Naive thymus-derived CD4-positive, alpha-beta T cell (primary cell): ENCODE measurements at regions of chr10 and their contacts with region 1.

Region 1: DNA sequence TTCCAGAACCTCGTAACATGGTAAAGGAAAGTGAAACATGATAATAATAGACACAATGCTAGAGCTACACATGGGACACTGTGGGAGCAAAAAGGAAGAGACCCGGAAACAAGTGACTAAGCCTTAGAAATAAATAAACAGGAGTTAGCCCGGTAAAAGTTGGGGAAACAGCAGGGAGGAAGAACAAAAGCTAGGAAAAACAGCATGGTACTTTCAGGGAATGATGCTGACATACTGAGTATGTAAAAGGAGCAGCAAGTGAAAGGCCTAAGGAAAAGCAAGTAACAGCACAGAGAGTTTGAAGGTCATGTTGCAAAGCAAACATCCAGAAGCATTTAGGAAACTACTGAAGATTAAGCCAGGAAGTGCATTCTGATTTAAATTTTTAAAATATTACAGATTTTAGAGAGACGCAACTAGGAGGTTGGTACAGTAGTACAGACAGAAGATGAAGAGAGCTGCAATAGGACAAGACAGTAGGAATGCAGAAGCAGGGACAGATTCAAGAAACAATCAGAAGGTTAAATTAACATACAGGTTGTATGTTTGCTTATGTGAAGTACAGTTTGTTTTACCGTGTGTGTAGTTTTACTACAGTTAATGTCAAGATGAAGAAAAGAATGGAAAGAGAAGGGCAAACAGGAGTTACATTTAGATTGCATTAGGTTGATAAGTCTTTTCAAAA is 63.7 kb downstream of the ARHGAP12 start:
- DNase-seq: no peak
- ATAC-seq: no peak
- H3K4me3 ChIP-seq: no peak overlapping the region
- H3K4me3 Mint-ChIP-seq: peak overlapping the region in 1 of 10 donors; percentile 40
- H3K27ac ChIP-seq: no peak overlapping the region
- H3K27ac Mint-ChIP-seq: peak overlapping the region in 3 of 9 donors; percentile 1 to 3 (median 2)
- H3K4me1 ChIP-seq: peaks cover 0 to 3% of the 10 kb centered on the region in 2 donors
- H3K4me1 Mint-ChIP-seq: peaks cover 8 to 41% (median 34%) of the 10 kb centered on the region in 7 donors
- H3K27me3 ChIP-seq: no peaks in the 10 kb centered on the region
- H3K27me3 Mint-ChIP-seq: no peaks in the 10 kb centered on the region

Region 2: GRCh38 chr10:31947144-31947926 is 82.4 kb after region 1 on chr10:
- CTCF ChIA-PET with region 1: no interaction called
- POLR2A ChIA-PET with region 1: no interaction called
- intact Hi-C with region 1: loop called in 1 of 2 experiments (anchors 5 kb)
- DNase-seq: no peak
- ATAC-seq: no peak
- H3K4me3 ChIP-seq: no peak overlapping the region
- H3K4me3 Mint-ChIP-seq: no peak overlapping the region
- H3K27ac ChIP-seq: no peak overlapping the region
- H3K27ac Mint-ChIP-seq: no peak overlapping the region
- H3K4me1 ChIP-seq: no peaks in the 10 kb centered on the region
- H3K4me1 Mint-ChIP-seq: peaks cover 0 to 13% (median 2%) of the 10 kb centered on the region in 7 donors
- H3K27me3 ChIP-seq: no peaks in the 10 kb centered on the region
- H3K27me3 Mint-ChIP-seq: no peaks in the 10 kb centered on the region

Region 3: DNA sequence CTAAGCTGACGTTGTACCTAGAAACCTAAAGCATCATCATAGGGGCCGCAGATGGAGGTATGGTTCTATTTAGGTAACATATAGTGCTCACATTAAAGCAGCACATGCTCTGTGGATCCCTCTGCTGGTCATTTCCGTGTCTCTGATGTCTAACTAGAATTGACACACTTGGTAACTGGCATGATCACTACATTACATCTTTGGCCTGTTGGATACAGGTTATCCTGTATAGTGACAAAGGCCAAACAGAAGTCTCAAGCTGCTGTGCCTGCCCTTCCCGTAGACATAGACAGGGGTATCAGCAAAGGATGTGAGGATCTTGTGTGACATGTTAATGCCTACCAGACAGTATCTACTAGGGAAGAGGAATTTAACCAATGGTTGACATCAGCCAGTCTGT is 140.1 kb after region 1 on chr10:
- CTCF ChIA-PET with region 1: interaction called, 27 read pairs
- POLR2A ChIA-PET with region 1: interaction called, 3 read pairs
- intact Hi-C with region 1: loop called (anchors 1 kb)
- DNase-seq: peak in 7 of 9 donors; percentile 27 to 46 (median 40)
- ATAC-seq: peak; percentile 79
- H3K4me3 ChIP-seq: no peak overlapping the region
- H3K4me3 Mint-ChIP-seq: no peak overlapping the region
- H3K27ac ChIP-seq: no peak overlapping the region
- H3K27ac Mint-ChIP-seq: peak overlapping the region in 4 of 9 donors; percentile 36 to 85 (median 76)
- H3K4me1 ChIP-seq: no peaks in the 10 kb centered on the region
- H3K4me1 Mint-ChIP-seq: peaks cover 0 to 20% (median 13%) of the 10 kb centered on the region in 7 donors
- H3K27me3 ChIP-seq: no peaks in the 10 kb centered on the region
- H3K27me3 Mint-ChIP-seq: no peaks in the 10 kb centered on the region

Region 4: DNA sequence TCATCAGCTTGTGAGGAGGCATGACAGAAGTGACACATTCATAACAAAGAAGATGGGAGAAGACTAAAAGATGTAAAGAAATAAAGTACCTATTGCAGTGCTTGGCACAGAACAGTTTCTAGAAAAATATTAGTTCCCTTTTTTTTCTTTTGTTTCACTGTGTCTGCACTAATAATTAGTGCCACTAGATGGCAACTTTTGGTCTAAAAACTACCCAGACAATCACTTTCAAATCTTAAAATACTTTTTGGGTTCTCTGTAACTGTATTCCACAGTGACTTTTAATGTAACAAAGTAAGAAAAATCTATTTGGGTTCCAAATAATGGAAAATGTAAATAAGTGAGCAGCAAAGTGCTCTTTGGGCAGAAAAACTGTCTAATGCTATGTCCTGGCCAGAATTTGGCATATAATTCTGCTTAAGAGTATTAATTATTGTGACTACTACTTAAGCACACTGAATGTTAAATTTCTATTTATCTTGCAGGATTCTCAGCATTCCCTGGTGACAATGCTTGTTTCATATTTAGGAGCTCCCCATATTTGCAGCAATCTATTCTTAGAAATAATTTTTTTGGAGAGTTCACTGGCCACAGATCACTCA is 326.0 kb after region 1 on chr10:
- CTCF ChIA-PET with region 1: interaction called, 4 read pairs
- POLR2A ChIA-PET with region 1: no interaction called
- intact Hi-C with region 1: loop called in 1 of 2 experiments (anchors 1 kb)
- DNase-seq: peak in 6 of 9 donors; percentile 17 to 49 (median 42)
- ATAC-seq: peak; percentile 70
- H3K4me3 ChIP-seq: no peak overlapping the region
- H3K4me3 Mint-ChIP-seq: no peak overlapping the region
- H3K27ac ChIP-seq: no peak overlapping the region
- H3K27ac Mint-ChIP-seq: peak overlapping the region in 1 of 9 donors; percentile 3
- H3K4me1 ChIP-seq: no peaks in the 10 kb centered on the region
- H3K4me1 Mint-ChIP-seq: peaks cover 0 to 5% (median 4%) of the 10 kb centered on the region in 7 donors
- H3K27me3 ChIP-seq: no peaks in the 10 kb centered on the region
- H3K27me3 Mint-ChIP-seq: peaks cover 0 to 9% (median 0%) of the 10 kb centered on the region in 5 donors

Region 5: DNA sequence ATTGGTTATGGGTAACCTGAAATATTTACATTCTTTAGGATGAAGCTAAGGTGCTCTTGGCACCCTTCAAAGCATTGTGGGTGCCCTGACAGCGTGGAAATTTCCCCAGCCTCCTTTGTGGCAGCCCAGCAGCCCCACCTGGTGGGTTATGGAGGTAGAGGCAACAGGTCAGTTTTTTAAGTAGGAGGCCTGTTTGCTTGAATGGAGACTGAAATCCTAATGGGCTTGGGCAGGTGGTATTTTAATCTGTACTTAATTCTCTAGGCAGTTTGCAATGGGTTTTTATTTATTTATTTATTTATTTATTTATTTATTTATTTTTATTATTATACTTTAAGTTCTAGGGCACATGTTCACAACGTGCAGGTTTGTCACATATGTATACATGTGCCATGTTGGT is 342.6 kb after region 1 on chr10:
- CTCF ChIA-PET with region 1: interaction called, 4 read pairs
- POLR2A ChIA-PET with region 1: no interaction called
- intact Hi-C with region 1: loop called (anchors 1 kb)
- DNase-seq: peak; percentile 18 to 65 (median 40)
- ATAC-seq: peak; percentile 91
- H3K4me3 ChIP-seq: no peak overlapping the region
- H3K4me3 Mint-ChIP-seq: no peak overlapping the region
- H3K27ac ChIP-seq: no peak overlapping the region
- H3K27ac Mint-ChIP-seq: no peak overlapping the region
- H3K4me1 ChIP-seq: no peaks in the 10 kb centered on the region
- H3K4me1 Mint-ChIP-seq: peaks cover 0 to 5% (median 4%) of the 10 kb centered on the region in 7 donors
- H3K27me3 ChIP-seq: no peaks in the 10 kb centered on the region
- H3K27me3 Mint-ChIP-seq: peaks cover 0 to 6% (median 0%) of the 10 kb centered on the region in 5 donors

Region 6: DNA sequence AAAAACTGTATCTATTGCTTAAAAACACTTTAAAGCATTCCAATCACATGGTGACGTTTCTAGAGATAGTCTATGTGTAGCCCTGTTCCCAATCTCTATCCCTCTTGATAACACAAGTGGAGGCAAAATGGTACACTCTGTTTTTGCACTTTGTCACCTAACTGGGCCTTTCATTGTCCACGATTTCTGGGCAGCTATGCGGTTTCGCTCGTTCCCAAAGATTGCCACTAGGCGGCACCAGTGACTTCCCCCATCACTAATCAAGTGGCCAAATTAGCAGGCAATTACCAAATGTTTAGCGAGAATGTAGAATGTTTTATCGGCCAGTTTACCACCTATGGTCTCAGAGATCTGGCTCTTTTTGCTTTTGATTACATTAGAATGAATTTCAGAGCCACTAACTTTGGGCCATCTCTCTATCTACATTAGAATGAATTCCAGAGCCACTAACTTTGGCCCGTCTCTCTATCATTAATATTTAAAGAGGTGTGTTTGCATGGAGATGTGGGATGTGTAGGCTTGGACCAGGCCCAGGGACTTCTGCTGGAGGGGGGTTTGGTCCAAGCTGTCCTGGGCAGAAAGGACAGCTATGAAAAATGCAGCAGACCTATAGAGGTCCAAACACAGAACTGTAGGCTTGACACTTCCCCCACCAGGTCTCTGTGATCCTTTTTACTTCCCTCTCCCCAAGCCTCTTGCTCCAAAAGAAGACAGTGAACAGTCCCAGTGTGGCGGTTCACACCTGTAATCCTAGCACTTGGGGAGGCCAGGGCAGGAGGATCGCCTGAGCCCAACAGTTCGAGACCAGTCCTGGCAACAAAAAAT is 391.8 kb after region 1 on chr10:
- CTCF ChIA-PET with region 1: interaction called, 3 read pairs
- POLR2A ChIA-PET with region 1: no interaction called
- intact Hi-C with region 1: loop called in 1 of 2 experiments (anchors 1 kb)
- DNase-seq: peak; percentile 31 to 67 (median 57)
- ATAC-seq: peak; percentile 89
- H3K4me3 ChIP-seq: no peak overlapping the region
- H3K4me3 Mint-ChIP-seq: peak overlapping the region in 1 of 10 donors; percentile 60
- H3K27ac ChIP-seq: no peak overlapping the region
- H3K27ac Mint-ChIP-seq: peak overlapping the region in 1 of 9 donors; percentile 51
- H3K4me1 ChIP-seq: peaks cover 0 to 5% of the 10 kb centered on the region in 2 donors
- H3K4me1 Mint-ChIP-seq: peaks cover 1 to 13% (median 5%) of the 10 kb centered on the region in 7 donors
- H3K27me3 ChIP-seq: no peaks in the 10 kb centered on the region
- H3K27me3 Mint-ChIP-seq: no peaks in the 10 kb centered on the region

Region 7: DNA sequence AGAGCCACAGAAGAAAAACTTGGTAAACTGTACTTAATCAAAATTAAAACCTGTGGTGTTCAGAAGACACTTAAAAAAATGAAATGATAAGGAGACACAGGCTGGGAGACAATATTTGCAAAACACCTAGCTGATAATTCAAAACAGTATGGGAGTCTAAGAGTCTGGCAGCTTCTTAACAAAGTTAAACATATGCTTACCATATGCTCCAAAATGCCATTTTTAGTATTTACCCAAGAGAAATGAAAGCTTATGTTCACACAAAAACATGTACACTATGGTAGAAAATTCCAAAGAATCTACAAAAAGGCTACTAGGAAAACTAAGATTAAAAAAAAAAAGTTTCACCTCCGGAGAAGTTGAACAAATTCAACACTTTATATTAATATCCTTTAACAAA is 1044.5 kb after region 1 on chr10:
- CTCF ChIA-PET with region 1: no interaction called
- POLR2A ChIA-PET with region 1: no interaction called
- intact Hi-C with region 1: no loop called
- DNase-seq: no peak
- ATAC-seq: no peak
- H3K4me3 ChIP-seq: no peak overlapping the region
- H3K4me3 Mint-ChIP-seq: no peak overlapping the region
- H3K27ac ChIP-seq: no peak overlapping the region
- H3K27ac Mint-ChIP-seq: no peak overlapping the region
- H3K4me1 ChIP-seq: no peaks in the 10 kb centered on the region
- H3K4me1 Mint-ChIP-seq: peaks cover 0 to 4% (median 0%) of the 10 kb centered on the region in 7 donors
- H3K27me3 ChIP-seq: no peaks in the 10 kb centered on the region
- H3K27me3 Mint-ChIP-seq: no peaks in the 10 kb centered on the region